ENCODE measurements at regions of chr10 and their contacts with region 1.

Region 1: GRCh38 chr10:72223743-72224101 is 7.6 kb upstream of the ASCC1 start:
- DNase-seq: peak; percentile 44
- H3K4me3 Mint-ChIP-seq: no peak overlapping the region
- H3K27ac Mint-ChIP-seq: peak overlapping the region; percentile 89
- H3K4me1 Mint-ChIP-seq: peaks cover 63% of the 10 kb centered on the region
- H3K27me3 Mint-ChIP-seq: no peaks in the 10 kb centered on the region

Region 2: DNA sequence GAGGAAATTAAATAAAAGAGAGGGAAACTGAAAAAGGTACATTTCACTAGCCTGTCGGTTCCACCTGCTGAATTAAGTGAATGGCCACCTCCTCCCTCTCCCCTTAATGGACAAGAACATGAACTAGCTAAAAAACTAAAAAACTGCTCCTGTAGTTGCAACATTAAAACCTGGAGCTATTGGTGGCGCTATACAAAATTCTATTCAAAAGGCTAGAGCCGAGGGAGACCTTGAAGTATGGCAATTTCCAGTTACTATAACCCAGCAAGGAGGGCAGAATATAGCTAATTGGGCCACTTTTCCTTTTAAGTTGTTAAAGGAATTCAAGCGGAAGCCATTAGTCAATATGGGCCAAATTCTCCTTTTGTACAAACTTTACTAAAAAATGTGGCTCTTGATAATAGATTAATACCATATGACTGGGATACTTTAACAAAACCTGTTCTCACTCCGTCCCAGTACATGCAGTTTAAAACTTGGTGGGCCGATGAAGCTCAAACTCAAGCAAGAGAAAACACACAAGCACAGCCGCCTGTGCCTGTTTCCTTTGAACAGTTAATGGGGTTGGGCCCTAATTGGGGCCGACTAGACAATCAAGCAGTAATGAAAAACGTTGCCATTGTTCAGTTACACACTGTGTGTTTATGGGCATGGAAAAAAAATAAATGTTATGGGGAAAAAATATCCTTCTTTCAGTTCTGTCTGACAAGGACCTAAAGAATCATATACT is 266.0 kb before region 1 on chr10:
- CTCF ChIA-PET with region 1: interaction called, 9 read pairs
- intact Hi-C with region 1: loop called (anchors 5 kb)
- DNase-seq: no peak
- H3K4me3 Mint-ChIP-seq: no peak overlapping the region
- H3K27ac Mint-ChIP-seq: no peak overlapping the region
- H3K4me1 Mint-ChIP-seq: no peaks in the 10 kb centered on the region
- H3K27me3 Mint-ChIP-seq: peaks cover 9% of the 10 kb centered on the region

Region 3: DNA sequence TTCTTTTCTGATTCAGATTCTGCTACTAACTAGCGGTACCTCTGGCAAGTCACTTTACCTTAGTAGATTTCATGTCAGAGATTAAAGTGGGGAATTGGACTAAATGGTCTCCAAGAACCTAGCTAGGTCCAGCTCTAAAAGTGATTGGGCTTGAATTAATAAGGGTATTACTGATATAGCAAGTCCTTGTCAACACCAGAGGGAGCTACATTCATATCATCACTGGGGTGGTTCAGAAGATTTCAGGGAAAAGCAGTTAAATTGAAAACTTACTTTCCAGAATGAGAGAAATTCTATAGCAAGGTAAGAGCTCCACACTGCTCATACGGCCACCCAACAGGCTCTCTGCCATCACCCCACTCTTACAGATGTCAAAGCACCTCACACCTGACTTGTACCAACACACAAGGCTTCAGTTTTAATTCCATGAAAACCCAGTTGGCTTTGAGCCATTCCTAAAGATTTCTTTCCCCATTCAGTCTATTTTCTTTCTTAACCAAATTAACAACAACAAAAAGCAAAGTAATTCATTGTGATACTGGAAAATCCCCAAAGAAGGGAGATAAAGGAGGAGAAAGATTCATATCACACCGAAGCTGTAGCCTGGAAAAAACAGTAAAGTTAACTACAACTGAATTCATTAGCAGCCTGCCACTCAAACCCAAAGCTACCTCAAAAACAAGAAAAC is 97.4 kb before region 1 on chr10:
- CTCF ChIA-PET with region 1: interaction called, 10 read pairs
- intact Hi-C with region 1: no loop called
- DNase-seq: no peak
- H3K4me3 Mint-ChIP-seq: no peak overlapping the region
- H3K27ac Mint-ChIP-seq: peak overlapping the region; percentile 16
- H3K4me1 Mint-ChIP-seq: peaks cover 46% of the 10 kb centered on the region
- H3K27me3 Mint-ChIP-seq: no peaks in the 10 kb centered on the region

Region 4: DNA sequence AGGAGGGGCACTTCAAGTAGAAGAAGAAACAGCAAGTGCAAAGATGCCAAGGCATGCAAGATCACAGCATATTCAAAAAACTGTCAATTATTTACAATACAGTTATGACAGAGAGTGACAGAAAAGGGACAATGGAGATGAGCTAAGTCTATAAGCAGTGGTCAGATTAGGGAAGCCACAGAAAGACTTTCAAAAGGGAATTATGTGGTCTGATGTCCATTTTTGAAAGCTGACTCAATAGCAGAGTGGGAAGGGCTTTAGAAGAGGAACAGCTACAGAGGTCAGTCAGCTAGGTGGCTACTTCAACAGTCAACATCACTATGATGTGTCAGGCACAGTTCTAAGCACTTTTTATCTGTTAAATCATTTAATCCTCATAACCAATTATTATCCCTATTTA is 90.2 kb before region 1 on chr10:
- CTCF ChIA-PET with region 1: interaction called, 7 read pairs
- intact Hi-C with region 1: loop called (anchors 2 kb)
- DNase-seq: no peak
- H3K4me3 Mint-ChIP-seq: no peak overlapping the region
- H3K27ac Mint-ChIP-seq: no peak overlapping the region
- H3K4me1 Mint-ChIP-seq: peaks cover 39% of the 10 kb centered on the region
- H3K27me3 Mint-ChIP-seq: no peaks in the 10 kb centered on the region

Region 5: GRCh38 chr10:72238392-72239175 is 14.9 kb after region 1 on chr10:
- CTCF ChIA-PET with region 1: interaction called, 10 read pairs
- intact Hi-C with region 1: no loop called
- DNase-seq: no peak
- H3K4me3 Mint-ChIP-seq: no peak overlapping the region
- H3K27ac Mint-ChIP-seq: no peak overlapping the region
- H3K4me1 Mint-ChIP-seq: peaks cover 34% of the 10 kb centered on the region
- H3K27me3 Mint-ChIP-seq: no peaks in the 10 kb centered on the region

Region 6: DNA sequence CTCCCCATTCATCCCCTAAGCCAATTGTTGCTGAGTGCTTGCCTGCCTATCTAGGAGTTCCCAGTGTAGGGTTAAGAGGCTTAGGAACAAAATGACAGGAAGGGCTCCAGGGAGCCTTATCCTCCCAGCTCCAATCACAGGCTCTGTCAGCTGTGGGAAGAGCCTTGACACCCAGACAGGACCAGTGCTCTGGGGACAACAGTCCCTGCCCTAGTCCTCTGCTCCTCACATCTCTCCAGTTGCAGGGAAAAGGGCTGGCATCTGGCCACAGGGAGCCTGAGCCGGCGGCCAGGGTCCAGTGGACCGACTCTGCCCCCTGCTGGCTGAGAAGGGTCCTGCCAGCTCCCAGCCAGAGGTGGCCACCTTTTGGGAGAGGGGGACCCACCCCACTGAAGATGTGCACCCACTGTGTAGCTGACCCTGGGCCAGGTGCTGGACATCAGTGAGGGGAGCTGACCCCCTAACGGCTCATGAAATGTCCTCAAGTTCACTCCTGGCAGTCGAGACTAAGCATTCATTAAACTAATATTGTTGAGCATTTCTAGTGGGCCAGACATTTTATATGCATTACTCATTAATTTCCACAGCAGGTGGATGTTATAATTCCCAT is 113.4 kb after region 1 on chr10:
- CTCF ChIA-PET with region 1: interaction called, 43 read pairs
- intact Hi-C with region 1: loop called (anchors 1 kb)
- DNase-seq: peak; percentile 79
- H3K4me3 Mint-ChIP-seq: no peak overlapping the region
- H3K27ac Mint-ChIP-seq: peak overlapping the region; percentile 100
- H3K4me1 Mint-ChIP-seq: peaks cover 52% of the 10 kb centered on the region
- H3K27me3 Mint-ChIP-seq: no peaks in the 10 kb centered on the region